WTC11 (cell line): ENCODE measurements at regions of chr3 and their contacts with region 1.

Region 1: GRCh38 chr3:184748219-184749135 is 36.6 kb upstream of the MAGEF1 start:
- DNase-seq: peak; percentile 51
- ATAC-seq: peak; percentile 90
- H3K4me3 Mint-ChIP-seq: no peak overlapping the region
- H3K27ac Mint-ChIP-seq: no peak overlapping the region
- H3K4me1 Mint-ChIP-seq: peaks cover 49% of the 10 kb centered on the region
- H3K27me3 Mint-ChIP-seq: peaks cover 11% of the 10 kb centered on the region; the same call in 1 of the 2 replicates
- CTCF ChIP-seq: peak; percentile 48

Region 2: GRCh38 chr3:184737641-184738535 is 10.6 kb before region 1 on chr3:
- CTCF ChIA-PET with region 1: interaction called, 10 read pairs
- POLR2A ChIA-PET with region 1: no interaction called
- DNase-seq: no peak
- ATAC-seq: no peak
- H3K4me3 Mint-ChIP-seq: no peak overlapping the region
- H3K27ac Mint-ChIP-seq: no peak overlapping the region
- H3K4me1 Mint-ChIP-seq: peaks cover 14% of the 10 kb centered on the region
- H3K27me3 Mint-ChIP-seq: no peaks in the 10 kb centered on the region
- CTCF ChIP-seq: no peak

Region 3: GRCh38 chr3:184777336-184778004 is 29.0 kb after region 1 on chr3:
- CTCF ChIA-PET with region 1: interaction called, 18 read pairs
- POLR2A ChIA-PET with region 1: no interaction called
- DNase-seq: peak; percentile 93
- ATAC-seq: peak; percentile 81
- H3K4me3 Mint-ChIP-seq: no peak overlapping the region
- H3K27ac Mint-ChIP-seq: no peak overlapping the region
- H3K4me1 Mint-ChIP-seq: peaks cover 43% of the 10 kb centered on the region
- H3K27me3 Mint-ChIP-seq: no peaks in the 10 kb centered on the region; the same call in none of the 2 replicates
- CTCF ChIP-seq: peak; percentile 74